Transverse colon (tissue), 4 donors: ENCODE measurements at regions of chr7 and their contacts with region 1.

Region 1: GRCh38 chr7:143479055-143479766 is 1.5 kb downstream of the TAS2R41 start:
- DNase-seq: no peak
- H3K4me3 ChIP-seq: no peak overlapping the region
- H3K27ac ChIP-seq: no peak overlapping the region
- H3K4me1 ChIP-seq: peaks cover 0 to 7% (median 2%) of the 10 kb centered on the region in 4 donors
- H3K27me3 ChIP-seq: no peaks in the 10 kb centered on the region
- CTCF ChIP-seq: no peak
- EP300 ChIP-seq: no peak
- POLR2A ChIP-seq: no peak

Region 2: GRCh38 chr7:143416565-143417149 is 62.6 kb before region 1 on chr7:
- in situ Hi-C with region 1: loop called in 1 of 4 experiments (anchors 10 kb)
- intact Hi-C with region 1: no loop called
- DNase-seq: no peak
- H3K4me3 ChIP-seq: no peak overlapping the region
- H3K27ac ChIP-seq: no peak overlapping the region
- H3K4me1 ChIP-seq: peaks cover 0 to 7% (median 0%) of the 10 kb centered on the region in 4 donors
- H3K27me3 ChIP-seq: no peaks in the 10 kb centered on the region
- CTCF ChIP-seq: peak; percentile 74 to 79 (median 77)
- EP300 ChIP-seq: no peak
- POLR2A ChIP-seq: no peak